Vagina (tissue), 2 donors: ENCODE measurements at regions of chr1 and their contacts with region 1.

Region 1: DNA sequence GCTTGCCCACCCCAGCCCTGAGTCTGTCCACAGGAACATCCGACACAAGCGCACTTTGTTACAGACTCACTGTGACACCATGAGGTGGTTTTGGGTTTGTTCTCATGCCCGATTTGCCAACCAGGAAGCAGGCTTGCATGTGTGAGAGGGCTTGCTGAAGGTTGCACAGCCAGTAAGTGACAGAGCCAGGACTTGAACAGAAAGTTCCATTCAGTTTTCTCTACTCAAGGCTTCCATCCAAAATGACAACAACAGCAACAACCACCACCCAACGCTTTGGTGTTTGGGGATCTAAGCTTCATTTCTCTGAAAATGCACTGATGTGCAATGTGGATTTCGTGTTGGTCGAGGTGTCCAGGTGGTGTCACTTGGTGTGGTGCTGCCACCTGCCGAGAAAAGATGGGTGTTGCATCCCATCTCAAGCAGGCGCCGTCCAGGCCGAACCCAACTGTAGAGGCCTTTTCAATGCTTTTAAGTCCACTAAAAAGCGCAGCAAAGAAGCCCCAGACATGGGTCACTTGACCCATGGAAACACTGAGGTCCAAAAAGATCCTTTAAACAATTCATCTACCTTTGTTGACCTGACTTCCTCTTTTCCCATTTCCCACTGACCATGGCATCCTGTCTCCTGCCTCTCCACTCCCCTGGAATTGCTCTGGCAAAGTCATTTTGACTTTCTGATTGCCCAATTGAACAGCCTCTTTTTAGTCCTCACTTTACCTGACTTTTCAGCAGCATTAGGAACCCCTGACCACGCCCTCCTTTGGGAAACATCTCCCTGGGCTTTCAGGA is 12.2 kb downstream of the CITED4 start:
- DNase-seq: no peak
- H3K4me3 ChIP-seq: no peak overlapping the region
- H3K27ac ChIP-seq: no peak overlapping the region
- H3K4me1 ChIP-seq: no peaks in the 10 kb centered on the region
- H3K27me3 ChIP-seq: no peaks in the 10 kb centered on the region
- CTCF ChIP-seq: peak; percentile 67 to 88 (median 78)
- POLR2A ChIP-seq: no peak

Region 2: GRCh38 chr1:40563266-40563665 is 286.7 kb before region 1 on chr1:
- intact Hi-C with region 1: no loop called
- DNase-seq: no peak
- H3K4me3 ChIP-seq: no peak overlapping the region
- H3K27ac ChIP-seq: no peak overlapping the region
- H3K4me1 ChIP-seq: no peaks in the 10 kb centered on the region
- H3K27me3 ChIP-seq: no peaks in the 10 kb centered on the region
- CTCF ChIP-seq: no peak
- POLR2A ChIP-seq: no peak

Region 3: DNA sequence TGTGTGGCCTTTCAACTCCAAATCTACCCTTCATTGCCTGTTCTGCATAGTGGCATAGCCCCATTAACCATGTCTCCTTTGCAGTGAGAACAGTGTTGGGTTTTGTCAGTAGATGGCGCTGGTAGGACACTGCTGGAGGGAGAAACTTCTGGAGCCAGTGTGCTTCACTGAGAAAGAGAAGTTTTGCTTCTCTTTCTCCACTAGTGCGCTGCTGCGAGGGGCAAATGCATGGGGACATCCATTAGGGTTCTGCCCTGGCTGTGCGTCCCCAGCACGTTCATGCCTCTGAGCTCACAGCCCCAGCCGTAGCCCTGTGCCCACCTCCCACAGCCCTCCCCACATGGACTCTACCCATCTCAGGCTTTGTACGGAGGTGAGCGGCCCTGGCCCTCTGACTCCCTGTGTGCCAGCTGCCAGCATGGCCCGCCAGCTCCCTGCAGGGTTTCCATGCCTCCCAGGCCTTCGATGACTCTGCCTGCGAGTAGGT is 237.6 kb before region 1 on chr1:
- intact Hi-C with region 1: loop called (anchors 10 kb)
- DNase-seq: no peak
- H3K4me3 ChIP-seq: no peak overlapping the region
- H3K27ac ChIP-seq: no peak overlapping the region
- H3K4me1 ChIP-seq: no peaks in the 10 kb centered on the region
- H3K27me3 ChIP-seq: no peaks in the 10 kb centered on the region
- CTCF ChIP-seq: peak; percentile 17 to 53 (median 50)
- POLR2A ChIP-seq: no peak

Region 4: GRCh38 chr1:40691538-40692428 is 158.2 kb before region 1 on chr1 and contains the start of gene NFYC:
- intact Hi-C with region 1: no loop called
- DNase-seq: peak in 1 of 2 donors; percentile 98
- H3K4me3 ChIP-seq: peak within 1 kb of the TSS; percentile 94 to 95
- H3K27ac ChIP-seq: peak within 1 kb of the TSS; percentile 99
- H3K4me1 ChIP-seq: peaks cover 45% of the 10 kb centered on the region
- H3K27me3 ChIP-seq: no peaks in the 10 kb centered on the region
- CTCF ChIP-seq: peak in 1 of 3 experiments; percentile 4
- POLR2A ChIP-seq: peak; percentile 15 to 90
- total RNA-seq, gene NFYC: 61.6 TPM

Region 5: DNA sequence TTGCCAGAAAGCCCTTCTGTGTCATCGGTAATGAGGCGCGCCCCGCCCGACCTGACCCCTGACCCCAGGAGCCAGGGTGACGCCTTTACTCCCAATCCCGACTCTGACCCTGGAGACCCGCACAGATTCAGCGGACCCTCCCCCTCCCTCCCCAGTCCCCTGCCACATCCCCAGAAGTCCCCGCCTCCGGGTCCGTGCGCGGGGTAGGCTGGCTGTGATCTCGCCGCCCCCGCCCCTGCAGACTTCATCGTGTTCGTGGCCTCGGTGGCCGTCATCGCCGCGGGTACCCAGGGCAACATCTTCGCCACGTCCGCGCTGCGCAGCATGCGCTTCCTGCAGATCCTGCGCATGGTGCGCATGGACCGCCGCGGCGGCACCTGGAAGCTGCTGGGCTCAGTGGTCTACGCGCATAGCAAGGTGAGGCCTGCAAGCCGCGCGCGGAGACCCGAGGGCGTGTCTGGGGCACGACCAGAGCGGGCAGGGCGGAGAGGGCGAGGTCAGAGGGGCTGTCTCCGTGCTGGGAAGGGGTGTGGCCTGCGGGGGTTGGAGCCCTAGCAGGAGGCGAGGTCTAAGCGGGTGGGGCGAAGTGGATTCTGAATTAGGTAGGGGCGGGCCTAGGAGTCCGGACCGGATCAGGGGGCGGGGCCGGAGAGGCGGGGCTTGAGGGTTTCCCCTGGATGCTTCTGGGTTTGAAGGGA is 31.6 kb before region 1 on chr1:
- intact Hi-C with region 1: no loop called
- DNase-seq: no peak
- H3K4me3 ChIP-seq: peak overlapping the region; percentile 42 to 47
- H3K27ac ChIP-seq: no peak overlapping the region
- H3K4me1 ChIP-seq: peaks cover 10% of the 10 kb centered on the region
- H3K27me3 ChIP-seq: no peaks in the 10 kb centered on the region
- CTCF ChIP-seq: no peak
- POLR2A ChIP-seq: no peak

Region 6: DNA sequence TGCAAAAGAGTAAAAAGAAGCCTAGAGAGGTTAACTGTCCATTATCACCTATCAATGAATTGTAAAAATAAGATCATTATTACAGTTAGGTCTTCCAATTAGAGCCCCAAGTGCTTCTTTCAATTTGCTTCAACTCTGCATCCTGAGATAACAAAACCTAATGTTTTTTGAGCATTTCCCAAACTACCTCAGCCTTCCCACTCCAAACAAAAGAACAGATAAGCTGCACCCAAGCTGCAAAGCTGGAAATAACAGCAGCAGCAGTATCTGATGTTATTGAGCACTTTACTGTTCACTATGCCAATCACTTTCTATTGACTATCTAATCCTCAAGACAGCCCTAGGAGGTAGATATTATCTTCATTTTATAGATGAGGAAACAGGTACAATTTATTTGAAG is 268.6 kb after region 1 on chr1:
- intact Hi-C with region 1: no loop called
- DNase-seq: no peak
- H3K4me3 ChIP-seq: no peak overlapping the region
- H3K27ac ChIP-seq: no peak overlapping the region
- H3K4me1 ChIP-seq: peaks cover 5% of the 10 kb centered on the region
- H3K27me3 ChIP-seq: no peaks in the 10 kb centered on the region
- CTCF ChIP-seq: no peak
- POLR2A ChIP-seq: no peak